ENCODE measurements at regions of chr3 and their contacts with region 1.

Region 1: DNA sequence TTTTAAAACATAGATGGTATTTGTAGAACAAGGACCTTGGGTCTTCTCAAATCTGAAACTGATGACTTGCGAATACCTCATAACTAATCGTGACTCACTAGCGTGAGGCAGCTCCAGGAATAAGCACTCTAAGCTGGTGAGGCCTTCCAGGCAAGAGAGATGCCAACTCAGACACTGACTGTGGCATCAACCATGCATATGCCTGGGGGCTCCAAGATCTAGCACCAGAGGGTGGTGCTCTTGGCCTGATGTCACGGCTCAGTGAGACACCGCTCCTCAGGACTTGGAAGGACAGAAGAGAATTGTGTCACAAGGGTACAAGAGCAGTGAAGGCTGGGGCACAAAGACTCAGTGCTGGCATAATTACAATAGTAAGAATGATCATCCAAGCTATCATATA is 125.0 kb upstream of the TRIM42 start:
- DNase-seq: no peak
- ATAC-seq: peak; percentile 63

Region 2: DNA sequence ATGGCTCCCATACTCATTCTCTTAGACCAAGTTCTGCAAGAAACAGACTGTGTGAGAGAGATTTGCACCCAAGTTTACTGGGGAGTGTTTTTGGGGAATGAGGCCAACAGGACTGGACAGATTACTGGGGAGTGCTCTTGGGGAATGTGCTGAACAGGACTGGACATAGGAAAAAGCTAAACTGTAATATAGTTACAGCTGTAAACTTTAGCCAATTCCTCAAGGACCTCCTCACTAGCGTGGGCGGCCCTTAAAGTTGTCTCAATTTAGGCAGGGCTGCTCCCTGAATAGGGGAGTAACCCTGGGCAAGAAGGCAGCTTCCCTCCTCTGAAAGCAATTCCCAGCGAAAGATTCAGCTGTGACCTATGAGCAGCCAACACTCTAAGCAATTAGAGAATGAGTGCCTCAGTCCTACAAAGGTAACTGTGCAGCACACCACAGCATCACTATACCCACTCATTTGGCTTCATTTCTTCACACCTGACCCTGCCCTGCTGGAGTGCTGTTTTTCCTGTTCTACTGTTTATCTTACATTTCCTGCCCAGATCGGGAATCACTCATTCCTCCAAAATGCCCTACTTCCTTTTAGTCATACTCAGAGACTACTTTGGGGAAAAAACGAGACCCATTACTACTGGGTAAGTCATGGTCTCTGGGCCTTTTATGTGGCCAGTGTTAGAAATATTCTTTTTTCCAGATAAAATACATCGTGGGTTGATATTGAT is 83.7 kb after region 1 on chr3:
- intact Hi-C with region 1: no loop called
- DNase-seq: peak; percentile 56
- ATAC-seq: peak; percentile 83

Region 3: GRCh38 chr3:140736863-140737460 is 184.1 kb after region 1 on chr3:
- intact Hi-C with region 1: loop called (anchors 1 kb)
- DNase-seq: no peak
- ATAC-seq: peak; percentile 78

Region 4: DNA sequence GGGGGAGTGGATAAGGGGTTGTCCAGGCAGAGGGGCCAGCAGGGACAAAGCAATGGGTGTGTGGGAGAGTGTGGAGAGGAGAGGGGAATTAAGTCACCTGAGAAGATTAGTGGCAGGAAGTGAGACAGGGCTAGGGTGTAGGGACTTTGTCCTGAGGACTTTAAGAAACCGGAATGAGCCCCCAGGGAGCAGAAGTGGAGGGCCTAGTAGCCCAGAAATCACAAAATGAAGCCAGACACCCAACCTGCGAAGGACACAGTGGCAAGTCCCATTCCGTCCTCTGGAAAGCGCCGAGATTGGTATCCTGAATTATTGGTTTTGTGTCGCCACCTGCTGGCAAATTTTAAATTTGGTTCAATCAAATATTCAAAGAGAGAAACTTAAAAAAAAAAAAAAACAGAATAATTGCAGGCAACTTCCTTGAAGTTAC is 310.7 kb after region 1 on chr3:
- intact Hi-C with region 1: loop called (anchors 5 kb)
- DNase-seq: no peak
- ATAC-seq: no peak

Measured in Right ventricle myocardium inferior (tissue), 1 donor.